ENCODE measurements at regions of chr17 and their contacts with region 1.

Region 1: DNA sequence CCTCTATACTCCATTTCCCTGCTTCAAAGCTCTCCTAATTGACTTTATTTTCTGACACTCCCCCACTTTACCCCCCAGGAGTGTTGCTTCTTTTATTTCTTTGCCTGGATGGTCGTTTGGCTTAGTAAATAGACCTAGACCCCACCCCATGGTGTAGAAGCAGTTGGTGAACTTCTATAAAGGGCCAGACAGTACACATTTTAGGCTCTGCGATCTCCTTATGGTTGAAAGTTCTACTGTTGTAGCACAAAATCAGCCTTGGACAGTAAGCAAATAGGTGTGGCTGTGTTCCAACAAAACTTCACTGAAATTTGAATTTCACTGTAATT is 31.9 kb downstream of the ZNF287 start:
- DNase-seq: no peak

Region 2: DNA sequence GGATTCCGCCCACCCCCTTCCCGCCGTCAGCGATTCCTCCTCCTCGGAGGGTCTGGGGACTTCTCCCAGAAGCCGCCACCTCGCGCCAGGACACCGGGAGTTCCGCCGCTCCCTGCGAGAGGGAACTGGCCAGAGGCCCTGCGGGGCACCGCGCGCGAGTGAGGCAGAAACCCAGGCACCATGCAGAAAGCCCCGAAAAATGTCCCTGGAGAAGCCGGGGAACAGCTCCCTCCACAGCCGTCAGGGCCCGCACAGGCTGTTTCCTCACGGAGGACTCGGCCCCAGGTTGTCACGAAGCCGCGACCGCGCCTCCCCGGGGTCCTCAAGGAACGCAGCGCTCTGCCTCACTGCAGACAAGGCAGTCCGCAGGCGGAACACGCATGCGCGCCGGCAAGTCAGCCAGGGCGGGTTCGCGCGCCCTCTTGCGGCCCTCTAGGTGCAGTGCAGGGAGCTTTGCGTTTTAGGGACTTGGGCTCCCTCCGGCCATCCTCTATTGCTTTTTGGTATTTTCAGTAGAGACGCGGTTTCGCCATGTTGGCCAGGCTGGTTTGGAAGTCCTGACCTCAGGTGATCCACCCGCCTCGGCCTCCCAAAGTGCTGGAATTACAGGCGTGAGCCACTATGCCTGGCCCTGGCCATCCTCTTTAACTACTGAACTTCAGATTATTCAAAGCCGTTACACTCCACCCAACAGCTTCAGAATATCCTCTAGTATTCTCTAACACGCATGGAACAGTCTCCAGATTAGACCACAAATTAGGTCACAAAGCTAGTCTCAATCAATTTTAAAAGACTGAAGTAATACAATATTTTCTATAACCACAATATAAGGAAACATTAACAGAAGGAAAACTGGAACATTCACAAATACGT is 52.2 kb after region 1 on chr17:
- intact Hi-C with region 1: loop called (anchors 2 kb)
- DNase-seq: peak; percentile 97

Region 3: DNA sequence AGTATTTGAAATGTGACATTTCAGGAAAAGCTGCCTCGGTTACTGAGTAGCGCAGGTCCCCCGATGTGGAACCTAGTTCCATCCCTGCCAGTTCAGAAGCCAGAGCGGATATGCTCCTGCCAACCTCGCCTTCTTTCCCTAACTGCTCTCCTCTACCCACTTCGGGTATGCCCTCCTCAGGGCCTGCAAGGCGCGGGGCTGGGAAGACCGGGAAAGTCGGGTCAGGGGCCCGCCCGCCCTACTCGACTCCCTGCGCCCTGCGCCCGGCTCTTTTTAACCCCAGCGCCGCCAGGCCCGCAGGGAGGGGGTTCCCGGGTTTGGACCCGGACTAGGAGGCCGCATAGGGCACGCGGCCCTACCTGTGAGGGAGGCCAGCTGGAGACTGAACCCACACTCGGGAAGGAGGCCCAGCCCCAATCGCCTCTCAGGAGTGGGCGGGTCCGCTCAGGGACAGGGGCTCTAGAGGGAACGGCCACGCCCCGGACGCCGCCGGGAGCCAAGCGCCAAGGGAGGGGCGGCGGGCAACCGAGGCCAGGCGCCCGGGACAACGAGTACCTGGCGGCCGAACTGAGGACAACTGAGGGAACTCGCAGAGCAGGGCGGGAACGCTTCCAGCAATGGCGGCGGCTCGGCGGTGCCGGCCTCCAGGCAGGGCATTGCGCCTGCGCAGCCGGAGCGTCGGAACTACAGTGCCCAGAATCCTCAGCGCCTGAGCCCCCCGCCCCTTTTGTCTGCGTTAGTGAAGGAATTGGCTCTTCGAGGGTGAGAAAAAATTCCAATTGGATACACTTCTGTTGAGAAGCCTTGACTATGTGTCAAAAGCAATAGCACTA is 116.3 kb after region 1 on chr17 and contains the start of gene ZNF624:
- intact Hi-C with region 1: loop called (anchors 5 kb)
- DNase-seq: peak; percentile 95
- total RNA-seq, gene ZNF624: 3.4 TPM

Region 4: GRCh38 chr17:16991349-16992009 is 454.4 kb after region 1 on chr17:
- intact Hi-C with region 1: loop called (anchors 2 kb)
- DNase-seq: peak; percentile 91

Region 5: DNA sequence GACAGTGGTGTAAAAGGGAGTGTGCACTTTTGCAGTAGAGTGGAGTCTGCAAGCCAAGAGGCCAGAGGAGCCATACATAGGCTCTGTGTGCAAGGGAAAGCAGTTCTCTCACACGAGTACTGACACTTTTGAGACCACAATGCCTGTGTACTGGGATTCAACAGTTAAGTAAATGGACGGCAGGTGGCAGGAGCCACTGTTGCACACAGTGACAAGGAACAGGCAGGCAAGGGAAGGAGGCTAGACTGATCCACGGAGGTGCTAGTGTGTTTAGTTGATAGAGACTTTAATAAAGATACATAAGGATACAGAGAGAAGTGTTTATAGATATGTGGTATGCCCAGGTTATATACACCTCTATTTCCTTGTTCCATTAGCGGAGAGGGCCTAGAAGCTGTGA is 572.2 kb after region 1 on chr17:
- intact Hi-C with region 1: no loop called
- DNase-seq: no peak

Region 6: GRCh38 chr17:17237026-17237799 is 700.1 kb after region 1 on chr17 and contains the start of gene FLCN:
- intact Hi-C with region 1: loop called (anchors 10 kb)
- DNase-seq: peak; percentile 97
- total RNA-seq, gene FLCN: 36.1 TPM

Measured in cardiac septum (tissue), 1 donor.